Ascending aorta (tissue), 2 donors: ENCODE measurements at regions of chr15 and their contacts with region 1.

Region 1: GRCh38 chr15:37100109-37100965 is at the start of gene MEIS2:
- DNase-seq: peak; percentile 66 to 95
- H3K4me3 ChIP-seq: peak within 1 kb of the TSS; percentile 66 to 81
- H3K27ac ChIP-seq: peak within 1 kb of the TSS; percentile 94 to 96
- H3K4me1 ChIP-seq: peaks cover 0 to 3% of the 10 kb centered on the region in 2 donors
- H3K27me3 ChIP-seq: no peaks in the 10 kb centered on the region
- CTCF ChIP-seq: no peak
- total RNA-seq, gene MEIS2: 11.5 TPM

Region 2: GRCh38 chr15:35306361-35306981 is 1793.9 kb before region 1 on chr15:
- intact Hi-C with region 1: loop called (anchors 10 kb)
- DNase-seq: no peak
- H3K4me3 ChIP-seq: no peak overlapping the region
- H3K27ac ChIP-seq: peak overlapping the region; percentile 80 to 85
- H3K4me1 ChIP-seq: peaks cover 6 to 28% of the 10 kb centered on the region in 2 donors
- H3K27me3 ChIP-seq: no peaks in the 10 kb centered on the region
- CTCF ChIP-seq: no peak

Region 3: GRCh38 chr15:35690698-35691116 is 1409.6 kb before region 1 on chr15:
- intact Hi-C with region 1: loop called (anchors 2 kb)
- DNase-seq: peak in 1 of 2 donors; percentile 79
- H3K4me3 ChIP-seq: no peak overlapping the region
- H3K27ac ChIP-seq: peak overlapping the region; percentile 82 to 88
- H3K4me1 ChIP-seq: peaks cover 9 to 34% of the 10 kb centered on the region in 2 donors
- H3K27me3 ChIP-seq: no peaks in the 10 kb centered on the region
- CTCF ChIP-seq: no peak

Region 4: GRCh38 chr15:36356978-36357601 is 743.2 kb before region 1 on chr15:
- intact Hi-C with region 1: loop called (anchors 10 kb)
- DNase-seq: no peak
- H3K4me3 ChIP-seq: peak overlapping the region in 1 of 2 donors; percentile 14
- H3K27ac ChIP-seq: peak overlapping the region; percentile 84
- H3K4me1 ChIP-seq: peaks cover 8 to 18% of the 10 kb centered on the region in 2 donors
- H3K27me3 ChIP-seq: no peaks in the 10 kb centered on the region
- CTCF ChIP-seq: no peak

Region 5: DNA sequence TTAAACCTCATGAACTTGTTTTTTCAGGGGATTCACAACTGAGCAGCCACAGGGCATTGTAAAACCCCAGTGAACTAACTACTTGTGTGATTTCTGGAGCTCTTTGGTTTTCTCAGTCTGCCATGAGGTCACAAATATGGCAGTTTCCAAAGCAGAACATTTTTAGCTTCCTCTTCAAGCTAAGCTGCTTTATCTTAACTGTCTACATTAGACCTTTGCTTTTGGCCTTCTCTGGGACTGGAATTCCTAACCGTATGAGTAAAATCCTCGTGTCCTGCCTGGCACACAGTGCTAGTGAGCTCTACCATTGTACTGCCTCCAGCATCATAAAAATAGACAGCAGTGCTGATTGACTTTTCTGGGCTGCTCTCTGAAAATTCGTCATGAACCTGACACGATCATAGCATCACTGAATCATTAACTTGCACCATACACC is 498.8 kb before region 1 on chr15:
- intact Hi-C with region 1: loop called (anchors 5 kb)
- DNase-seq: peak; percentile 27 to 90
- H3K4me3 ChIP-seq: peak overlapping the region in 1 of 2 donors; percentile 54
- H3K27ac ChIP-seq: peak overlapping the region; percentile 91 to 94
- H3K4me1 ChIP-seq: peaks cover 2 to 15% of the 10 kb centered on the region in 2 donors
- H3K27me3 ChIP-seq: no peaks in the 10 kb centered on the region
- CTCF ChIP-seq: no peak

Region 6: GRCh38 chr15:37125143-37125542 is 24.8 kb after region 1 on chr15:
- intact Hi-C with region 1: no loop called
- DNase-seq: no peak
- H3K4me3 ChIP-seq: no peak overlapping the region
- H3K27ac ChIP-seq: no peak overlapping the region
- H3K4me1 ChIP-seq: no peaks in the 10 kb centered on the region
- H3K27me3 ChIP-seq: no peaks in the 10 kb centered on the region
- CTCF ChIP-seq: no peak

Region 7: GRCh38 chr15:37550360-37551024 is 450.2 kb after region 1 on chr15:
- intact Hi-C with region 1: no loop called
- DNase-seq: no peak
- H3K4me3 ChIP-seq: no peak overlapping the region
- H3K27ac ChIP-seq: no peak overlapping the region
- H3K4me1 ChIP-seq: no peaks in the 10 kb centered on the region
- H3K27me3 ChIP-seq: no peaks in the 10 kb centered on the region
- CTCF ChIP-seq: no peak

Region 8: DNA sequence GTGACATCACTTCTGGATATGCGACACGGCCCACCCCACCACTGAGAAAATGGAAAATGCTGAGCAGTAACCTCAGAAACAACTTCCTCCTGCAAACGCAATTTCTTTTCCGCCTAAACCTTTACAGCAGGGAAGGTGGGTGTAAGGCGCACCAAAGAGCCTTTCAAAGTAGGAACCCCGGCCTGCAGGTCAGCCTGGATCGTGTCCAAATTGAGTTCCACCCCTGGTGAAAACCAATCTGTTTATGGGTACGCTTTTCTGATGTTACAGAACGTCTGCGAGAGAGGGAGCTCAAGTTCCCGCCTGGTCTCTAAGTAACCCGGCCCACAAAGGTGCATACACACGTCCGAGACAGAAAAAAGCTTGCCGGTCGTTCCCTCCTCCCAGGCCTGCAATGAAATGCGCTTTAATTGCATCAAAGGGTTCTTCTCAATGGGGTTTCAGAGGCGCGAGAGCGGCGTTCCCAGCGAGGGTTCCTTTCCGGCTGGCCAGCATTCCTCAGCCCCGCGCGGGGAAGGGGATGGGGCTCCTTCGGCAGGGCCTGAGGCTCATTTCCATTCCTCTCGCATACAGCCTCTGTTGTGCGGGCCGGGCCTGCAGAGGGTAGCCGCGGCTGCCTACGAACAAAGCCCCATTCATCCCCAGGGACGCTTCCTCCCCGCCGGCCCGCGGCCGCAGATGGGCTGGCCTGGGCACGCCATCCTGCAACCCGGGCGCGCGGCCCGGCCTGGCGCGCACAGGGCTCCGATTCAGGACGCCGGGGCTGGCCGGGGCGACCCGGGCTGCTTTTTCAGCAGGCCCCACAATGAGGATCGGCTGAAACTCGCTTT is 972.2 kb after region 1 on chr15:
- intact Hi-C with region 1: loop called (anchors 5 kb)
- DNase-seq: peak in 1 of 2 donors; percentile 83
- H3K4me3 ChIP-seq: peak overlapping the region; percentile 56 to 79
- H3K27ac ChIP-seq: peak overlapping the region; percentile 94 to 95
- H3K4me1 ChIP-seq: peaks cover 0 to 22% of the 10 kb centered on the region in 2 donors
- H3K27me3 ChIP-seq: no peaks in the 10 kb centered on the region
- CTCF ChIP-seq: peak in 1 of 3 experiments; percentile 28